Activated CD4-positive, alpha-beta memory T cell treated with anti-CD3 and anti-CD28 coated beads for 36 hours (primary cell): ENCODE measurements at regions of chr2 and their contacts with region 1.

Region 1: GRCh38 chr2:148813603-148814065 is 61.4 kb upstream of the KIF5C start:
- DNase-seq: peak; percentile 95
- H3K4me3 Mint-ChIP-seq: no peak overlapping the region
- H3K27ac Mint-ChIP-seq: peak overlapping the region; percentile 29
- H3K4me1 Mint-ChIP-seq: peaks cover 22% of the 10 kb centered on the region
- H3K27me3 Mint-ChIP-seq: peaks cover 11% of the 10 kb centered on the region

Region 2: GRCh38 chr2:148829618-148830017 is 16.0 kb after region 1 on chr2:
- CTCF ChIA-PET with region 1: no interaction called
- POLR2A ChIA-PET with region 1: no interaction called
- intact Hi-C with region 1: no loop called
- DNase-seq: no peak
- H3K4me3 Mint-ChIP-seq: no peak overlapping the region
- H3K27ac Mint-ChIP-seq: no peak overlapping the region
- H3K4me1 Mint-ChIP-seq: no peaks in the 10 kb centered on the region
- H3K27me3 Mint-ChIP-seq: peaks cover 1% of the 10 kb centered on the region

Region 3: GRCh38 chr2:148917431-148917830 is 103.8 kb after region 1 on chr2:
- CTCF ChIA-PET with region 1: interaction called, 3 read pairs
- POLR2A ChIA-PET with region 1: no interaction called
- intact Hi-C with region 1: loop called (anchors 2 kb)
- DNase-seq: peak; percentile 47
- H3K4me3 Mint-ChIP-seq: no peak overlapping the region
- H3K27ac Mint-ChIP-seq: no peak overlapping the region
- H3K4me1 Mint-ChIP-seq: peaks cover 14% of the 10 kb centered on the region
- H3K27me3 Mint-ChIP-seq: no peaks in the 10 kb centered on the region